ENCODE measurements at regions of chr15 and their contacts with region 1.

Region 1: GRCh38 chr15:98856218-98856907 is 151.2 kb downstream of the PGPEP1L start:
- DNase-seq: peak; percentile 90
- H3K4me3 ChIP-seq: no peak overlapping the region
- H3K27me3 ChIP-seq: no peaks in the 10 kb centered on the region
- CTCF ChIP-seq: no peak

Region 2: GRCh38 chr15:98744506-98744905 is 111.9 kb before region 1 on chr15:
- CTCF ChIA-PET with region 1: no interaction called
- POLR2A ChIA-PET with region 1: interaction called, 10 read pairs
- DNase-seq: no peak
- H3K4me3 ChIP-seq: no peak overlapping the region
- H3K27me3 ChIP-seq: no peaks in the 10 kb centered on the region
- CTCF ChIP-seq: no peak

Region 3: GRCh38 chr15:98904544-98904943 is 48.2 kb after region 1 on chr15:
- CTCF ChIA-PET with region 1: interaction called, 22 read pairs
- POLR2A ChIA-PET with region 1: no interaction called
- DNase-seq: no peak
- H3K4me3 ChIP-seq: no peak overlapping the region
- H3K27me3 ChIP-seq: no peaks in the 10 kb centered on the region
- CTCF ChIP-seq: peak; percentile 83

Region 4: DNA sequence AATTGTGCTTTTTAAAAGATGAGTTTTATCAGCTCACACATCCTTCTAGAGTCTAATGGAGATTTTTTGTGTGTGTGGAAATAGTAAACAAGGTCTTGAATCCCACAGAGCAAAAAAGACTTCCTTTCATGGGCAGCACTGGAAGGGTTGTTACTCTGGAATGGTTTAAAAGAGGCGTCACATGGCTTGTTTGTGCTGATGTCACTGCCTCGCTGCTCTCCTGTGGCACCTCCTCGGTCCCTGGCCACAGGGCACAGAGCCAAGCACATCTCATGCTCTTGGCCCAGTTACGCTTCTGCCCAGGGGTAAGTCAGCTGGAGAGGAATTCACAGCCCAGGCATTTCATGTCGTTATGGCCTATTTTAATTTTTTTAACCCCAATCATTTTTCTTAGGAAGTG is 98.0 kb after region 1 on chr15:
- CTCF ChIA-PET with region 1: no interaction called
- POLR2A ChIA-PET with region 1: interaction called, 10 read pairs
- DNase-seq: peak; percentile 87
- H3K4me3 ChIP-seq: no peak overlapping the region
- H3K27me3 ChIP-seq: no peaks in the 10 kb centered on the region
- CTCF ChIP-seq: no peak

Region 5: DNA sequence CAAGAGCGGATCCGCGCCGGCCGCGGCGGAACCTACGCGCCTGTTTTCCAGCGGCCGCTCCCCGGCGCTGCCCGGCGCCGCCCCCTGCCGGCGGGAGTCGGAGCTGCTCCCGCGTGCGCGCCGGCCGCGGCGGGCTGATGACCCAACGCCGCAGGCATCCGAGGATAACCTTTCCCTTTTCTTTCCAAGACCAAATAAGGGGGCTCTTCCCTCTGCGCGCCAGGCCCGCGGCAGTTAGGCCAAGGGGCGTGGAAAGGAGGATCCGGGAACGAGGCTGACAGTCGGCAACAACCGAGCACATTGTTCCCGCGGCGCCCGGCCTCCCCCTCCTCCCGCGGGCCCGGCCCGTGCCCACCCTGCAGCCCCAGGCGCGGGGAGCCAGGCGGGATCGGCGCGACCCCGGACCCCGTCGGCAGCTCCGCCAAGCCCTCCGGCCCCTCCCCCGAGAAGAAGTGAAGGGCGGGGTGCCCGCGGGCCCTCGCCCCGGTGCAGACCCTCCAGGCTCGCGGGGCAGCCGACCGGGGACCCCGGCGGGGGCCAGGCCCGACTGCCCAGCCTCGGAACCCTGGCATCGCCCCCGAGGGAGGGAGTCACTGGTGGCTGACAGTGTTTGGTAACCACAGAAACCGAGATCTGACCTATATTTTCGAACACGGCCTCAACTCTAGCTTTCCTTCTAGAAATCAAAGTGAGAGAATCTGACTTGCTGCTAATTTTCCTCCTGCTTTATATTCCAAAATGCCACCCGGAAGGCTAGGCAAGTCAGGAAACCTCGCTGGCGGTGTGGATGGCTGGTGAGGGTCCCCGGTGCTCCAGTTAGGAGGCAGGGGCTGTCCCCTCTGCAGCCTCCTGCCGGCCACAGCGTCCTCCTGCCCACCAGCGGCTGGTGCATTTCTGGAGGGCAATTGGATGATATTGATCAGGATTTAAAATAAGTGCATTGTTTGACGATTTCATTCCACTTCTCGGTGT is 202.9 kb after region 1 on chr15:
- CTCF ChIA-PET with region 1: interaction called, 11 read pairs
- POLR2A ChIA-PET with region 1: interaction called, 9 read pairs
- DNase-seq: peak; percentile 49
- H3K4me3 ChIP-seq: peak overlapping the region; percentile 41
- H3K27me3 ChIP-seq: peaks cover 1% of the 10 kb centered on the region; the same call in 1 of the 2 replicates
- CTCF ChIP-seq: peak; percentile 47